Activated CD4-positive, alpha-beta T cell treated with anti-CD3 and anti-CD28 coated beads for 36 hours (primary cell): ENCODE measurements at regions of chr2 and their contacts with region 1.

Region 1: DNA sequence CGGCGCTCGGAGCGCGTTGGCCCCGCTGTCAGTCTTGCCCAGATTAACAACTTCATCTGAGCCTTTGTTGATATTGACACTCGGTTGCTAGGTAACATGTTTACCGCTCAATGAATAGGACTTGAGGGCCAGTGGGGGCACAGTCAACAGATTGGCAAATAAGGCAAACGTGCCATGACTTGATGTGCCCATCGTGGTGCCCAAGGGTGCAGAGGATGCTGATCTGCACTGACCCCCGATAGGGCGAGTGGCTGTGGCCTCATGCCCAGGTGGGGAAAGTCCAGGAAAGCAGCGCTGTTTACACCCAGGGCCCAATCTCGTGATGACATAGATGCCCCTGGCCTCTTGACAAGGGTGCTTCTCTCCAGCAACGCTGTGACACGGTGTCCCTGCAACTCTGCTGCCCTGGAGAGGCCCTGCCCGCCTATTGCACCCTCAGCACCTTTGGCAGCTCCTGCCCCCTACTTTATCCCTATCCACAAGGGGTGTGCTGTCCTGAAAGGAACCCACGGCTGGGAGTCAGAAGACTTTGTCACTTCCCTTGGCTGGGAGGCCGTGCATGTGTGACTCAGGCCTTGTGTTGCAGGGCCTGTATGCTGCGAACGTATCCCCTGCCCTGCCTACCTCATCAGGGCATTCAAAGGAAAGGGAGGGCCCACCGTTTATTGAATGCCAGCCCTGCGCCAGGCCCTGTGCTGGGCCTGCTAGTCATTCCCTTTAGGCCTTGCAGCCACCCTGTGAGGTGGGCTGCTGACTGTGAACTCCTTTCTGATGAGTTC is 158.0 kb downstream of the INHBB start:
- DNase-seq: no peak
- ATAC-seq: no peak
- H3K4me3 Mint-ChIP-seq: no peak overlapping the region
- H3K27ac Mint-ChIP-seq: no peak overlapping the region
- H3K4me1 Mint-ChIP-seq: no peaks in the 10 kb centered on the region
- H3K27me3 Mint-ChIP-seq: peaks cover 2% of the 10 kb centered on the region

Region 2: GRCh38 chr2:121076885-121077549 is 573.0 kb after region 1 on chr2:
- CTCF ChIA-PET with region 1: no interaction called
- POLR2A ChIA-PET with region 1: no interaction called
- intact Hi-C with region 1: loop called in 1 of 2 experiments (anchors 10 kb)
- DNase-seq: peak; percentile 87
- ATAC-seq: peak; percentile 60
- H3K4me3 Mint-ChIP-seq: no peak overlapping the region
- H3K27ac Mint-ChIP-seq: no peak overlapping the region
- H3K4me1 Mint-ChIP-seq: peaks cover 2% of the 10 kb centered on the region
- H3K27me3 Mint-ChIP-seq: peaks cover 23% of the 10 kb centered on the region